Ascending aorta (tissue), 2 donors: ENCODE measurements at regions of chr1 and their contacts with region 1.

Region 1: DNA sequence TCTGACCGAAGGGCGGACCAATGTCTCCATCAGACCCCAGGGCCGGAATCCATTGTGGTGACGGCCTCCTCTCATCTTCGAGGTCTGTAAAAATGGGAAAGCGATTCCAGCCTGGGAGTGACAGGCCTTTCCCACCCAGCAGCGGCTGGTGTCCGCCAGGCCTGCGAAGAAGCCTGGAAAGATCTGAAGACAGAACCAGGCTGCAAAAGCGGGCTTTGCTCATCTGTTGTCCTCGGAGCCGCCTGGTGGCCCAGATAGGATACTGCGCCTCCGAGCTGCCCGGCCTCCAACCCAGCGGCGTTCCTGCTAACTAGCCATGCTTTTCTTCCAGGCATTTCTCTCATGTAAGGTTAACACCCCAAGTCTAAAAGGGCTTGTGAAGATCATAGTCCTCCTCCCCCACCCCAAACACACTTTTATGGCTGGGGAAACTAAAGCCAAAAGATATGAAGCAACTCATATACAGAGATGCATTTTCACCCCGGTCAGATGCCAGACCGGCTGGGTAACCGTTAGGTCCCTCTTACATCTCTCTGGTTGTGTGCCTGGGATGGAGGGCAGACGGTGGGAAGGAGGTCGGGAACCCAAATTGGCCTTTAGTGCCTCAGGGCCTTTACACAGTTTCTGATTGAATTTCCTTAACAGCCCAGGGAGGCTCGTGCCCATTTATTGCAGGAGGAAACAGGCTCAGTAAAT is 1.9 kb upstream of the DHRS3 start:
- DNase-seq: peak; percentile 58 to 95
- H3K4me3 ChIP-seq: peak overlapping the region; percentile 83 to 85
- H3K27ac ChIP-seq: peak overlapping the region; percentile 95 to 96
- H3K4me1 ChIP-seq: peaks cover 11 to 37% of the 10 kb centered on the region in 2 donors
- H3K27me3 ChIP-seq: no peaks in the 10 kb centered on the region
- CTCF ChIP-seq: peak; percentile 94 to 97 (median 96)

Region 2: GRCh38 chr1:12275369-12275768 is 344.6 kb before region 1 on chr1:
- intact Hi-C with region 1: loop called (anchors 5 kb)
- DNase-seq: no peak
- H3K4me3 ChIP-seq: no peak overlapping the region
- H3K27ac ChIP-seq: no peak overlapping the region
- H3K4me1 ChIP-seq: no peaks in the 10 kb centered on the region
- H3K27me3 ChIP-seq: no peaks in the 10 kb centered on the region
- CTCF ChIP-seq: peak in 2 of 3 experiments; percentile 67 to 72

Region 3: GRCh38 chr1:12356004-12356890 is 263.7 kb before region 1 on chr1:
- intact Hi-C with region 1: loop called (anchors 2 kb)
- DNase-seq: no peak
- H3K4me3 ChIP-seq: peak overlapping the region in 1 of 2 donors; percentile 48
- H3K27ac ChIP-seq: peak overlapping the region; percentile 84
- H3K4me1 ChIP-seq: peaks cover 13 to 29% of the 10 kb centered on the region in 2 donors
- H3K27me3 ChIP-seq: no peaks in the 10 kb centered on the region
- CTCF ChIP-seq: no peak

Region 4: DNA sequence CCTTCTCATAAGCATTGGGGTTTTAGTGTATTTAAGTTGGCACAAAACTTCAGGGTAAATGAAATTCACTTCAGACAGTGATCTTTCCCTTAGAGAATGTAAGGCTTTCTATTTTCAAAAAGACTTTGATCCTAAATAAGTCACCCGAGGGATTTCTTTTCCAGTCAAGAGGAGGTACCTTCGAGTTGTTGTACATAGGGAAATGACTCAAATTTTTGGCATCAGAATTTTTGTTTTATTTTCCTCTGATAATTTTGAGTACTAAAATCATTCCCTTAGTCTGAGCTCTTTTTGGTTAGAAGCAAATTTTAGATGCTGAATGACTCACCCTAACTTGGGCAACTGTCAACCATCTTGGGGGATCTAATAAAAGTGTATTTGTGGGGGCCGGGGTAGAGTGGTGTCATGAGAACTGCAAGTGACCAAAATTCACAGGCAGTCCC is 195.8 kb before region 1 on chr1:
- intact Hi-C with region 1: loop called (anchors 5 kb)
- DNase-seq: peak in 1 of 2 donors; percentile 72
- H3K4me3 ChIP-seq: no peak overlapping the region
- H3K27ac ChIP-seq: peak overlapping the region; percentile 78
- H3K4me1 ChIP-seq: peaks cover 6 to 34% of the 10 kb centered on the region in 2 donors
- H3K27me3 ChIP-seq: no peaks in the 10 kb centered on the region
- CTCF ChIP-seq: no peak

Region 5: DNA sequence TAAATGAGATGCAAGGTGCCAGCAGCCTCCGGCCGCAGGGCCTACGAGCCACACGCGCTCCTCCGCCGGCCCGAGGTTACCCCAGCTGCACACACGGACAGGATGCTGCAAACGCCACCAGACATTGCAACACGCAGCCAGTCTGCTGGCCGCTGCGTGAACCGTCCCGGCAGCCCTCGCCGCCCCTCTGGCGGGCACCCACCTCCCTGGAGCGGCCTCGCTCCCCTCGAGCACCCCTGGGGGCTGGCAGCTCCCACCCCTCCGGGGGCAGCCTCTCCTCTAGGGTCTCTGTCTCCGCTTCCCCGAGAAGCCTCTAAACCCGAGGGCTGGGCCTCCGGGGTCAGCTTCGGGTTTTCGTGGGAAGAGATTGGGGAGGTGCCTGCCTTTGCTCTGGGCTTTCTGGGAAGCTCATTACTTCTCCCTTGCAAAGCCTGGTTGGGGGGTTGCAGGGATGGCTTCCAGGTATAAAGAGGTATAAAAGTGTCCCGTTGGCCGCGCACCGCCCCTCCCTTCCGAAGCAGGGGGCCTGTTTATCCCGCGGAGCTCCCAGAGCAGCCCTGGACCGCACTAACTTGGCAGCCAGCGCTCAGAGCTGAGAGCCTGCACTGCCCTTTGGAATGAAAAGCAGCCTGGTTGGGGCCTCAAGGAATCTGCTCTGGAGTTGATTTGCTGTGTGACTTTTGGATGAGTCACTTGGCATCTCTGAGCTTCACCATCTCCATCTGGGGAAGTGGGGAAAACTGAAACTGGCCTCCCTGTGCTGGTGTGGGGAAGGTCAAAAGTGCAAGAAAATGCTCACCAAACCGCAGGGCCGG is 23.7 kb before region 1 on chr1:
- intact Hi-C with region 1: loop called (anchors 1 kb)
- DNase-seq: peak; percentile 93 to 96
- H3K4me3 ChIP-seq: peak overlapping the region; percentile 52 to 63
- H3K27ac ChIP-seq: peak overlapping the region; percentile 96
- H3K4me1 ChIP-seq: peaks cover 43 to 70% of the 10 kb centered on the region in 2 donors
- H3K27me3 ChIP-seq: no peaks in the 10 kb centered on the region
- CTCF ChIP-seq: no peak

Region 6: DNA sequence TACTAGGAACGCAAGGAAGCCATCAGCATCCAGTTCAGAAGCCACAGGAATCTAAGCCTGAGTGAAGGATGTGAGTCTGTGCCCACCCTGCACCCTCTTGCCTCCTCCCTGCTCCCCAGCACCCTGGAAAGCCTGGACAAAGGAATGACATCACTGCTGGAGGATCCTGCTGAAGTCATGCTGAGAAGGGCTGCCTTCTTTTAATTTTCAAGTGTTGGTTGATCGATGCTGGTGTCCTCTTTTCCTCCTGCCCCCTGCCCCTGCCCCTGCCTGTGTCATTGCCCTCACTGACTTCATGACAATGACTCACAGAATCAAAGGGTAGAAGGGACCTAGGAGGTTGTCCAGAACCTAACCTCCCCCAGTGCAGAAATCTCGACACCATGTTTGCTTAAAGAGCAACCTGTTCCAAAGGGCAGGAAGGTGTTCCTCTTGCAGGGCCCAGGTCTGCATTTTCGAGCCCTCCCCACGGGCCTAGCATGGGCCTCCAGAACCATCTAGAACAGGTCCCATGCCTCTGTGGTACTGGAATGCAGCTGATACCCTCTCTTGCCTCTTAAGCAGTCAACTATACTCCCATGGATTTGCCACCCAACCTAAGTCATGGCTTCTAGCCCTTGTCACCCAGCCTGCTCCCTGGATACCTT is 11.5 kb before region 1 on chr1:
- intact Hi-C with region 1: no loop called
- DNase-seq: no peak
- H3K4me3 ChIP-seq: no peak overlapping the region
- H3K27ac ChIP-seq: peak overlapping the region in 1 of 2 donors; percentile 38
- H3K4me1 ChIP-seq: peaks cover 0 to 23% of the 10 kb centered on the region in 2 donors
- H3K27me3 ChIP-seq: no peaks in the 10 kb centered on the region
- CTCF ChIP-seq: no peak